ENCODE measurements at regions of chr14 and their contacts with region 1.

Region 1: GRCh38 chr14:98138666-98139065 is 1133.3 kb downstream of the BCL11B start:
- DNase-seq: peak; percentile 66
- H3K4me3 Mint-ChIP-seq: no peak overlapping the region
- H3K27ac Mint-ChIP-seq: peak overlapping the region; percentile 58
- H3K4me1 Mint-ChIP-seq: peaks cover 69% of the 10 kb centered on the region
- H3K27me3 Mint-ChIP-seq: no peaks in the 10 kb centered on the region

Region 2: GRCh38 chr14:98099527-98099926 is 39.1 kb before region 1 on chr14:
- CTCF ChIA-PET with region 1: no interaction called
- POLR2A ChIA-PET with region 1: no interaction called
- DNase-seq: no peak
- H3K4me3 Mint-ChIP-seq: no peak overlapping the region
- H3K27ac Mint-ChIP-seq: no peak overlapping the region
- H3K4me1 Mint-ChIP-seq: peaks cover 8% of the 10 kb centered on the region
- H3K27me3 Mint-ChIP-seq: no peaks in the 10 kb centered on the region

Region 3: DNA sequence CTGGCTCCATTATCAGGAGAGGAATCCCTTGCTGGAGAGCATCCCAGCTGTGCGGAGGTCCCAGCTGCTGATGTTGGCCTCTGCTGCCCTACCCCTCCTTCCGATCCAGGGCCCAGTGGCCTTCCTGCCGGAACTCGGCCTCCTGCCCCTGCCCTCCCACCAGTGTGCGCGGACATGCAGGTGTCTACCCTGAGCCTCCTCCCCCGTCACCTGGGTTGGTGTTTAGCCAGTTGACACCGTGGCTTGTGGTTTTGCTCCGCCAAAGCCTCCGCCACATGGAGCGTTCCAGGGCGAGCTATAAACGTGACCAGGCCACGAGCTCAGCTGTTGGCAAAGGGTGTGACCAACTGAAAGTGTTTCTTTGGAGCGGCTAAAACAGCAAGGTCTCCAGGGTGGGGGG is 29.0 kb after region 1 on chr14:
- CTCF ChIA-PET with region 1: interaction called, 36 read pairs
- POLR2A ChIA-PET with region 1: interaction called, 24 read pairs
- DNase-seq: peak; percentile 55
- H3K4me3 Mint-ChIP-seq: no peak overlapping the region
- H3K27ac Mint-ChIP-seq: no peak overlapping the region
- H3K4me1 Mint-ChIP-seq: peaks cover 49% of the 10 kb centered on the region
- H3K27me3 Mint-ChIP-seq: peaks cover 2% of the 10 kb centered on the region

Region 4: DNA sequence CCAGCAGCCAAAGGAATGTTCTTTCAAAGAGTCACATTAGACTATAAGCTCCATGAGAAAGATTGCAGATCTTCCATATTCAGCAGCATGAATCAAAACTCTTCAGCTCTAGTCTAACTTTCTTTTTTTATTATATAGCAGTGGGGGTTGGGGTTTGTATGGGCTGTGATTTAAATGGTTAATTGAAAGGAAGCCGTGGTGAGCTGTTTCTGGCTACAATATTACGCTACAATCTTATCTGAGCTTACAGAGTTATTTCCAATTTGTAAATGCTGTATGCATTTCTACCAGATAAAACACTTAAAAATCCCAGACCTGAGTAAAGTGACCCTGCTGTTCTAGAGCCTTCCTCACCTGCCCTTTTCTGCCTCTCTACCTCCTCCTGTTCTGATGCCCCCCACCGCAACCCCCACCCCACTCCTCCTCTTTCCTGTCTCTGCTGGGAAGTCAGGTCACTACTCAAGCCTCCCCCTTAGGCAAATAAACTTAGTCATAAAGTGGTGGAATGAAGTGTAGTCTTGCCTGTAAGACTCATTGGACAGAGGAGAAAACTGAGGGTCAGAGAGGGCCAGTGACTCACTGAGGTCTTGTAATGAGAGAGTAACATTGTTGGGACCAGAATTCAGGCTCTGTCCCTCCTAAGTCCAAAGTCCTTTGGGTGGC is 43.9 kb after region 1 on chr14:
- CTCF ChIA-PET with region 1: interaction called, 68 read pairs
- POLR2A ChIA-PET with region 1: interaction called, 71 read pairs
- DNase-seq: no peak
- H3K4me3 Mint-ChIP-seq: peak overlapping the region; percentile 12
- H3K27ac Mint-ChIP-seq: peak overlapping the region; percentile 83
- H3K4me1 Mint-ChIP-seq: peaks cover 85% of the 10 kb centered on the region
- H3K27me3 Mint-ChIP-seq: no peaks in the 10 kb centered on the region

Region 5: DNA sequence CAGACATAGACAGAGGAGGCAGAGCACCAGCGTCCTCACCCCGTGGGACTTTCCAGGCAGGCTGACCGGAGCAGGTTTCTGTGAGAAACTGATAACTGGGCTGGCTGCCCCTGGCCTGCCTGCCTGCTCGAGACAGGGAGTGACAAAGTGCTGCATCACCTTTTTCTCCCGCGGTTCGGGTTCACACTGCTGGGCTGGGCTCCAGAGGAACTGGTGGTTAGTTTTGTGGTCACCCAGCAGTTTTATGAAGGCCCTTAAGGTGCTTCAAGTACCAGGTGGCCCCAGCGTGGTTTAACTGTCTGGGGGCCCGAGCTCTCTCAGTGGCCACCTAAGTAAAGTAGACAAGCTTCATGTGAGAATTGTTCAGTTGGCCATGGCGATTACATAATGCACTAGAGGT is 59.7 kb after region 1 on chr14:
- CTCF ChIA-PET with region 1: interaction called, 5 read pairs
- POLR2A ChIA-PET with region 1: interaction called, 17 read pairs
- DNase-seq: peak; percentile 79
- H3K4me3 Mint-ChIP-seq: peak overlapping the region; percentile 33
- H3K27ac Mint-ChIP-seq: peak overlapping the region; percentile 79
- H3K4me1 Mint-ChIP-seq: peaks cover 54% of the 10 kb centered on the region
- H3K27me3 Mint-ChIP-seq: no peaks in the 10 kb centered on the region

Region 6: GRCh38 chr14:99192028-99192621 is 1053.5 kb after region 1 on chr14:
- CTCF ChIA-PET with region 1: interaction called, 13 read pairs
- POLR2A ChIA-PET with region 1: interaction called, 3 read pairs
- DNase-seq: peak; percentile 49
- H3K4me3 Mint-ChIP-seq: peak overlapping the region; percentile 75
- H3K27ac Mint-ChIP-seq: peak overlapping the region; percentile 88
- H3K4me1 Mint-ChIP-seq: peaks cover 95% of the 10 kb centered on the region
- H3K27me3 Mint-ChIP-seq: no peaks in the 10 kb centered on the region

Region 7: DNA sequence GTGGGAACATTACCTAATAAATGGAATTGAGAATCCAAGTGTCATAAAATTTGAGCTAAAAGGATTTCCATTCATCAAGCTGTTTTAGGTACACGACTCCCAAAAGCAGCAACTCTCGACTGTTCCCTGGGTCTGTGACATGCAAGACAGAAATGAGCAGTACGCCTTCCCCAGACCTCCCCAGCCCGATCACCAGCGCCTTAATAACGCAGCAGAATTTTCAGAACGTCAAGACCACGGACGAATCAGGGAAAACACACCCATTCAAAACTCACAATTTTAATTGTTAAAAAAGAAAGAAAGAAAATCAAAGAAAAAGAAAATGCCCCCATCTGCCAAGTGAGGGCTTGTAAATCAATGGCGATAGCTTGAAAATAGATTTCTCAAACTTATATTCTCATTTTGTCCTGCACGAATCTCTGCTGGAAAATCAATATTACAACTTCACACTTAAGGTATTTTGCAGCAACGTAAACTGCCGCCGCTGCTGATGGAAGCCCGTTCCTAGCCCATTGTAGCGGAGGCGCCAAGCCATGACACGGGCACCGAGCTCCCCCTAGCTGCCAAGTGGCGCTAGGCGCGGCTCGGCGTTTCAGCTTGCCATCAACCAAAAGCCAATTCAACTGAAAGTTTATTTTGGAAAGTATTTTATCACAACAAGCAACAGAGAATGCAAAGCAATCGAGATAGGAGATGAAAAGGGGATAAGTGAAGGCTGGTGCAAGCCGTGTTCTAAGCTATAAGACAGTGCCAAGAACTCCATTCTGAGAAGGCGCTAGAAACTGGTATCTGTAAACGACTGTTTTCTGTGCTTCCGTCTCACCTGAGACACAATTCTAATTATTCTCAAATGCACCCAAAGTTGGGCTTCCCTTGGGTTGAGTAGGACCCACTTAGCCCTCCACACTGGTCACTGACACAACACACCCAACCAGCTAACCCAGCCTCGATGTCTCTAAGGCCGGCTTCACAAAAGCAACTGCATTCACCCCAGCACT is 1127.8 kb after region 1 on chr14:
- CTCF ChIA-PET with region 1: interaction called, 26 read pairs
- POLR2A ChIA-PET with region 1: interaction called, 64 read pairs
- DNase-seq: peak; percentile 92
- H3K4me3 Mint-ChIP-seq: peak overlapping the region; percentile 99
- H3K27ac Mint-ChIP-seq: peak overlapping the region; percentile 100
- H3K4me1 Mint-ChIP-seq: peaks cover 59% of the 10 kb centered on the region
- H3K27me3 Mint-ChIP-seq: no peaks in the 10 kb centered on the region

Measured in activated CD4-positive, alpha-beta memory T cell treated with anti-CD3 and anti-CD28 coated beads, Interleukin-2, amount 10 ng/mL, durations not matched to agents 7 days and 5 days (primary cell).